GM12878 (cell line): ENCODE measurements at regions of chr1 and their contacts with region 1.

Region 1: GRCh38 chr1:56578963-56579875 is at the start of gene PLPP3:
- DNase-seq: no peak
- ATAC-seq: peak; percentile 59
- H3K4me3 ChIP-seq: peak within 1 kb of the TSS; percentile 72
- H3K27ac ChIP-seq: no peak within 1 kb of the TSS
- H3K4me1 ChIP-seq: no peaks in the 10 kb centered on the region
- H3K27me3 ChIP-seq: peaks cover 0 to 11% of the 10 kb centered on the region in 2 experiments; a peak in 2 of 4 replicates
- CTCF ChIP-seq: peak in 2 of 3 experiments; percentile 27 to 32; a peak in 4 of 6 replicates
- EP300 ChIP-seq: no peak
- POLR2A ChIP-seq: no peak
- RAD21 ChIP-seq: peak; percentile 53
- polyA plus RNA-seq, gene PLPP3: 7.4 to 8.0 TPM

Region 2: GRCh38 chr1:55478742-55479141 is 1100.5 kb before region 1 on chr1:
- CTCF ChIA-PET with region 1: interaction called, 111 read pairs
- POLR2A ChIA-PET with region 1: no interaction called
- RAD21 ChIA-PET with region 1: interaction called, 78 read pairs
- SMC1A ChIA-PET with region 1: interaction called, 91 read pairs
- in situ Hi-C with region 1: loop called (anchors 10 kb)
- intact Hi-C with region 1: loop called (anchors 1 kb)
- DNase-seq: no peak
- ATAC-seq: peak; percentile 69
- H3K4me3 ChIP-seq: no peak overlapping the region
- H3K27ac ChIP-seq: no peak overlapping the region
- H3K4me1 ChIP-seq: no peaks in the 10 kb centered on the region
- H3K27me3 ChIP-seq: 0 out of 4 replicates have a peak, but pooled peaks cover 0 to 1% of the 10 kb centered on the region in 2 experiments
- CTCF ChIP-seq: peak in 2 of 3 experiments; percentile 7 to 34; a peak in 2 of 6 replicates
- EP300 ChIP-seq: no peak
- POLR2A ChIP-seq: no peak
- RAD21 ChIP-seq: no peak

Region 3: GRCh38 chr1:56045477-56045876 is 533.7 kb before region 1 on chr1:
- CTCF ChIA-PET with region 1: interaction called, 3 read pairs
- POLR2A ChIA-PET with region 1: no interaction called
- RAD21 ChIA-PET with region 1: interaction called, 5 read pairs
- SMC1A ChIA-PET with region 1: interaction called, 4 read pairs
- in situ Hi-C with region 1: no loop called
- intact Hi-C with region 1: loop called (anchors 5 kb)
- DNase-seq: no peak
- ATAC-seq: peak; percentile 93
- H3K4me3 ChIP-seq: no peak overlapping the region
- H3K27ac ChIP-seq: no peak overlapping the region
- H3K4me1 ChIP-seq: peaks cover 8% of the 10 kb centered on the region
- H3K27me3 ChIP-seq: no peaks in the 10 kb centered on the region
- CTCF ChIP-seq: no peak
- EP300 ChIP-seq: no peak
- POLR2A ChIP-seq: no peak
- RAD21 ChIP-seq: no peak

Region 4: GRCh38 chr1:56339786-56340465 is 239.3 kb before region 1 on chr1:
- CTCF ChIA-PET with region 1: interaction called, 17 read pairs
- POLR2A ChIA-PET with region 1: interaction called, 9 read pairs
- RAD21 ChIA-PET with region 1: interaction called, 167 read pairs
- SMC1A ChIA-PET with region 1: interaction called, 73 read pairs
- in situ Hi-C with region 1: no loop called
- intact Hi-C with region 1: no loop called
- DNase-seq: no peak
- ATAC-seq: peak; percentile 76
- H3K4me3 ChIP-seq: no peak overlapping the region
- H3K27ac ChIP-seq: no peak overlapping the region
- H3K4me1 ChIP-seq: no peaks in the 10 kb centered on the region
- H3K27me3 ChIP-seq: no peaks in the 10 kb centered on the region
- CTCF ChIP-seq: no peak
- EP300 ChIP-seq: no peak
- POLR2A ChIP-seq: no peak
- RAD21 ChIP-seq: no peak

Region 5: GRCh38 chr1:56496821-56497772 is 82.1 kb before region 1 on chr1:
- CTCF ChIA-PET with region 1: interaction called, 3 read pairs
- POLR2A ChIA-PET with region 1: no interaction called
- RAD21 ChIA-PET with region 1: interaction called, 13 read pairs
- SMC1A ChIA-PET with region 1: interaction called, 13 read pairs
- in situ Hi-C with region 1: no loop called
- intact Hi-C with region 1: no loop called
- DNase-seq: no peak
- ATAC-seq: peak; percentile 50
- H3K4me3 ChIP-seq: no peak overlapping the region
- H3K27ac ChIP-seq: no peak overlapping the region
- H3K4me1 ChIP-seq: no peaks in the 10 kb centered on the region
- H3K27me3 ChIP-seq: no peaks in the 10 kb centered on the region
- CTCF ChIP-seq: no peak
- EP300 ChIP-seq: no peak
- POLR2A ChIP-seq: no peak
- RAD21 ChIP-seq: no peak

Region 6: GRCh38 chr1:56547953-56548352 is 31.3 kb before region 1 on chr1:
- CTCF ChIA-PET with region 1: interaction called, 8 read pairs
- POLR2A ChIA-PET with region 1: interaction called, 4 read pairs
- RAD21 ChIA-PET with region 1: interaction called, 87 read pairs
- SMC1A ChIA-PET with region 1: interaction called, 96 read pairs
- in situ Hi-C with region 1: no loop called
- intact Hi-C with region 1: no loop called
- DNase-seq: no peak
- ATAC-seq: no peak
- H3K4me3 ChIP-seq: no peak overlapping the region
- H3K27ac ChIP-seq: no peak overlapping the region
- H3K4me1 ChIP-seq: 0 out of 2 replicates have a peak, but pooled peaks cover 4% of the 10 kb centered on the region
- H3K27me3 ChIP-seq: no peaks in the 10 kb centered on the region; a peak in 1 of 4 replicates
- CTCF ChIP-seq: no peak
- EP300 ChIP-seq: no peak
- POLR2A ChIP-seq: no peak
- RAD21 ChIP-seq: no peak